ENCODE measurements at regions of chr20 and their contacts with region 1.

Region 1: DNA sequence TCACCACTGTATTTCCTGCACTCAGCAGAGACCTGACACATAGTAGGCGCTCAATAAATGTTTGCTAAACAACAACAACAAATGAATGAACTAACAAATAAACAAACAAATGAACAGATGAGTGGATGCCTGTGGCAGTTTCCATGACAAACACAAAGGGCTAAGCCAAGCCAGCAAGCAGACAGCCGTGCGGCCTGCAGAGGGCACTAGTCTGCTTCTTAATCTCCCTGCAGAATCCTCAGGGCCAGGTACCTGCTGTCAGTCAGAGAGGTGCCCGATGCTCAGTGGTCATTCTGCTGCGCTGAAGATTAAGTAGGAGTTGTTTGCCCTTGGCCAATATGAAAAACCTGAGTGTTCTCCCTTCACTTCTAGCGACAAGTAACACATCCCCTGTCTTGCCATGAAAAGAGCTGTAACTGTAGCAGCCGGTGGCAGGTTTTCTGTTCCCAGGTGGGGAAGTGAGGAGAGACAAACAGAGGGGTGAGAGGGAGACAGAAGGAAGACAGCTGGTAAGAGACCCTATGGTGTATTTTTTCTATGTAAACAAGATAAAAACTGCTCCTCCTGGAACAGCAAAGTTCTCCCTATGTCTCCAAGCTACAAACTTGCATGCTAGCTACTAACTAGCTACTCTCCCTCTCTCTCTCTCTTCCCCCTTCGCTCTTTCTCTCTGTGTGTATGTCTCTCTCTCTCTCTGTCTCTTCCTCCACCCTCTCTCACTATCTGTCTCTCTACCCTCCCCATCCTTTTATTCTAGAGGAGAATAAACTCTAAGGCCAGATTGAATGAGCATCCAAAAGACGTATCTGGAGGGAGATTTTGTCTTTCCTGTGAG is at the start of gene MC3R:
- DNase-seq: peak; percentile 68
- H3K4me3 Mint-ChIP-seq: no peak within 1 kb of the TSS
- H3K27ac Mint-ChIP-seq: no peak within 1 kb of the TSS
- H3K4me1 Mint-ChIP-seq: peaks cover 21% of the 10 kb centered on the region
- H3K27me3 Mint-ChIP-seq: peaks cover 35% of the 10 kb centered on the region
- CTCF ChIP-seq: peak; percentile 72
- total RNA-seq, gene MC3R: not detected in 2 replicates

Region 2: DNA sequence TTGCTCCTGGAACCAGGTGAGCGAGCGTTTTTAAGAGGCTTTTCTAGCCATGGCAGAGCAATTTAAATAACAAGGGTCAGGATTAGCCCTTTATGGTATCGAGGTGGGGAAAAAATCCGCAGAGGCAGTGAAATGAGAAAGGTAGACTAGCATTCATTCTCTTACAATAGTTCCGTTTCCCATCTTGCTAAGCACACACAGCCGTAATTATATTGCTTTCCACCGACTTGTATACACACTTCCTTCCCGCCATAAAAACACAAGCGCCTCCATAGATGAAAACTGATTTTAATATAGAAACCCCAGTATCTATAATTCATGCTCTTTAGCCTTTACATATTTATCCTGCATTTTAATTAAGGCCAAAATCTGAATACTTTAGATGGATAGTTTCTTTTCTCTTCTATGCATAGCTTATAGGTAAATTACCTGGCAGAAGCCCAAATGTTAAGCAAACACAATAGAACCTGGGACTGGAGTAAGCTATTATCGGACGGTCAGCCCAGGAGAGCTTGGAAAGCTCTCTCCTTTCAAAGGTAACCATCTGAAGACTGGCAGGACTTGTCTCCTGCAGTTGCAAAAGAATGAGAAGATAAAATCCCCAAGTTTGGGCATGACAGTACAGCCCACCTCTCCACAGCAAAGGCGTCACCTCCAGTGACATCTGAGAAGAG is 90.5 kb before region 1 on chr20:
- CTCF ChIA-PET with region 1: no interaction called
- POLR2A ChIA-PET with region 1: no interaction called
- intact Hi-C with region 1: no loop called
- DNase-seq: no peak
- H3K4me3 Mint-ChIP-seq: no peak overlapping the region
- H3K27ac Mint-ChIP-seq: no peak overlapping the region
- H3K4me1 Mint-ChIP-seq: no peaks in the 10 kb centered on the region
- H3K27me3 Mint-ChIP-seq: peaks cover 54% of the 10 kb centered on the region
- CTCF ChIP-seq: no peak

Region 3: DNA sequence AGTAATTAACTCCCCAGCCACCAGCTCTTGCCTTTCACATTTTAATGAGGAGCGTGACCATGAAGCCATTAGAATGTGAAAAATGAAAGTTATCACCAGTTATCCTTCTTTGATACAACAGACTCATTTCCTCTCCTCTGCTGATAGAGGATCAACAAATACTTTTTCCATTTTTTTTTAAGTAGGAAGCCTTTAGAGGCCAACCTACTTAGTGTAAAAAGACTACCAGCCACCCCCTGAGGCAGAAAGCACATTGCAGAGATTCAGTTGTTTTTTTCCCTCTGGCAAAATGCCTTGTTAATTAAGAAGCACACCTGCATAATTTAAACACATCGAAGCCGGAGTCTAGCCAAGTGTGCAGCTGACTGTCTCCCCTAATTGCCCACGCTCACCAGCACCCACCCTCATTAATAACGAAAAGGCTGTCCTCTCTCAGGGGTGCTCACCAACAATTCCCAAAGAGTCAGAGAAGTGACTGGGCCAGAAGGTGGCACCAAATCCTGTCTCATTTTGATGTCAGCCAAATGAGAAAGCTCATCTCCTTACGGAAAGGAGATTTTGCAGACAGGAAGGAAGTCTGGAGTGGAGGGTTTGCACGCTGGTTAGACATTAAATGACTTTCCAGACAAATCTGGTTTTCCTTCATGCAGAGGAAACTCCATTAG is 60.5 kb before region 1 on chr20:
- CTCF ChIA-PET with region 1: interaction called, 11 read pairs
- POLR2A ChIA-PET with region 1: interaction called, 3 read pairs
- intact Hi-C with region 1: loop called (anchors 5 kb)
- DNase-seq: peak; percentile 62
- H3K4me3 Mint-ChIP-seq: no peak overlapping the region
- H3K27ac Mint-ChIP-seq: no peak overlapping the region
- H3K4me1 Mint-ChIP-seq: peaks cover 6% of the 10 kb centered on the region
- H3K27me3 Mint-ChIP-seq: no peaks in the 10 kb centered on the region
- CTCF ChIP-seq: peak; percentile 48

Region 4: GRCh38 chr20:56207493-56208173 is 40.5 kb before region 1 on chr20:
- CTCF ChIA-PET with region 1: interaction called, 50 read pairs
- POLR2A ChIA-PET with region 1: no interaction called
- intact Hi-C with region 1: loop called (anchors 1 kb)
- DNase-seq: no peak
- H3K4me3 Mint-ChIP-seq: no peak overlapping the region
- H3K27ac Mint-ChIP-seq: no peak overlapping the region
- H3K4me1 Mint-ChIP-seq: no peaks in the 10 kb centered on the region
- H3K27me3 Mint-ChIP-seq: no peaks in the 10 kb centered on the region
- CTCF ChIP-seq: no peak

Region 5: DNA sequence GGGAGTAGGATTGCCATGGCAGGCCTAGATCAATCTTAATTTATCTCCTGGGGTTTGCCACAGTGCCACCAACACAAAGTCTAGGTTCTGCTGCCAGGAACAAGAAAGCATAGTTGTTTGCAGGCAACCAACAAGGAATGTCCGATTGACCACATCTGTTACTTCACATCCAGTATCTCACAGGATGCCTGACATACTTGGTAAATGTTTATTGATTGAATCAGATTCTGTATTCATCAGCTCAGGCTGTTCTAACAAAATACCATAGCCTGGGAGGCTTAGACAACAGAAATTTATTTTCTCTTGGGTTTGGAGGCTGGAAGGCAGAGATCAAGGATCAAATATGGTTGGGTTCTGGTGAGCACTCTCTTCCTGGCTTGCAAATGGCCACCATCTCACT is 26.0 kb before region 1 on chr20:
- CTCF ChIA-PET with region 1: interaction called, 16 read pairs
- POLR2A ChIA-PET with region 1: no interaction called
- intact Hi-C with region 1: no loop called
- DNase-seq: peak; percentile 55
- H3K4me3 Mint-ChIP-seq: peak overlapping the region; percentile 50
- H3K27ac Mint-ChIP-seq: peak overlapping the region; percentile 92
- H3K4me1 Mint-ChIP-seq: peaks cover 50% of the 10 kb centered on the region
- H3K27me3 Mint-ChIP-seq: no peaks in the 10 kb centered on the region
- CTCF ChIP-seq: no peak

Region 6: DNA sequence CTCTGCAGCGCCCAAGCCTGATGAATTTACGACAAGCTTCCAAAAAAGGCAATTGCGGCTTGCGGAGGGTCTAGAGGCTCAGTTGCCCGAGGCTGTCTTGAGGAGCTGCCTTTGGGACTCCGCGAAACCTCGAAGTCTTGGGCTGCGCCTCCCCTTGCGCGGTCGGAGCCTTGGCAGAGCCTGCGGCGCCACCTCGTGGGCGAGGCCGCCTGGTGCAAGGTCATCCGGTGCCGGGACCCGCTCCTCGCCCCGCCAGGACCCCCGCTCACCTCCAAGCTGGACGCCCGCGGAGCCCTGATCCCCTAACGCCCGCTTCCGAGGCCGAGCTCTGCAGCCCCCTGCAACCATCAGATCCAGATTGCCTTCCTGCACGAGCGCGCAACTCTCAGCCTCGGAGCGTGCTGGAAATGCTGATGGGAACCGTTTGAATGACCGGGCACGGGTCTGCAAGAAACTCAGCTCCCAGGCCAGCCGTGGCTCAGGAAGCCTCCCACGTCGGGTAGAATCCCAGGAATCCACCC is 95.8 kb after region 1 on chr20:
- CTCF ChIA-PET with region 1: interaction called, 115 read pairs
- POLR2A ChIA-PET with region 1: no interaction called
- intact Hi-C with region 1: loop called (anchors 1 kb)
- DNase-seq: no peak
- H3K4me3 Mint-ChIP-seq: no peak overlapping the region
- H3K27ac Mint-ChIP-seq: no peak overlapping the region
- H3K4me1 Mint-ChIP-seq: no peaks in the 10 kb centered on the region
- H3K27me3 Mint-ChIP-seq: peaks cover 25% of the 10 kb centered on the region
- CTCF ChIP-seq: peak; percentile 73

Region 7: DNA sequence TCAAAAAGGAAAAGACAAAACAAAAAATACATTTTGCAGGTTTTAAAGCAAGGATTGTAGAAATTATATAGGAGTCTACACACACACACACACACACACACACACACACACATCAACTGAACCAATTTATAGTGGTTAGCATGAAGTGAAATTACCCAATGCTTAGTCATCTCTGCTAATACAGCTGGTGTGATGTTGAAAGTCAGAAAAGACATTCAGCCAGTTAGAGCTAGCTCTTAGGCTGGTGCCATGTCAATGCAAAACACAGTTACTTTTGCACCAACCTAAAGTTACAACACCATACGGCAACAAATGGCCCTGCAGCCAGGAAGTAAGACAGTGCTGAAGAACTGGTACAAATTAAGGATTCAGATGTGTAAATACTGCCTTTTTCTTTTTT is 125.8 kb after region 1 on chr20:
- CTCF ChIA-PET with region 1: interaction called, 15 read pairs
- POLR2A ChIA-PET with region 1: interaction called, 4 read pairs
- intact Hi-C with region 1: no loop called
- DNase-seq: peak; percentile 93
- H3K4me3 Mint-ChIP-seq: peak overlapping the region; percentile 46
- H3K27ac Mint-ChIP-seq: peak overlapping the region; percentile 78
- H3K4me1 Mint-ChIP-seq: peaks cover 14% of the 10 kb centered on the region
- H3K27me3 Mint-ChIP-seq: no peaks in the 10 kb centered on the region
- CTCF ChIP-seq: no peak